Activated naive CD4-positive, alpha-beta T cell treated with anti-CD3 and anti-CD28 coated beads, Interleukin-2, amount 10 ng/mL, durations not matched to agents 7 days and 5 days (primary cell): ENCODE measurements at regions of chr6 and their contacts with region 1.

Region 1: GRCh38 chr6:43396407-43397149 is 27.1 kb upstream of the ZNF318 start:
- DNase-seq: no peak
- H3K4me3 Mint-ChIP-seq: no peak overlapping the region
- H3K27ac Mint-ChIP-seq: no peak overlapping the region
- H3K4me1 Mint-ChIP-seq: peaks cover 12% of the 10 kb centered on the region
- H3K27me3 Mint-ChIP-seq: peaks cover 63% of the 10 kb centered on the region

Region 2: GRCh38 chr6:43263314-43264178 is 133.0 kb before region 1 on chr6:
- CTCF ChIA-PET with region 1: interaction called, 12 read pairs
- DNase-seq: peak; percentile 87
- H3K4me3 Mint-ChIP-seq: no peak overlapping the region
- H3K27ac Mint-ChIP-seq: no peak overlapping the region
- H3K4me1 Mint-ChIP-seq: no peaks in the 10 kb centered on the region
- H3K27me3 Mint-ChIP-seq: peaks cover 62% of the 10 kb centered on the region

Region 3: DNA sequence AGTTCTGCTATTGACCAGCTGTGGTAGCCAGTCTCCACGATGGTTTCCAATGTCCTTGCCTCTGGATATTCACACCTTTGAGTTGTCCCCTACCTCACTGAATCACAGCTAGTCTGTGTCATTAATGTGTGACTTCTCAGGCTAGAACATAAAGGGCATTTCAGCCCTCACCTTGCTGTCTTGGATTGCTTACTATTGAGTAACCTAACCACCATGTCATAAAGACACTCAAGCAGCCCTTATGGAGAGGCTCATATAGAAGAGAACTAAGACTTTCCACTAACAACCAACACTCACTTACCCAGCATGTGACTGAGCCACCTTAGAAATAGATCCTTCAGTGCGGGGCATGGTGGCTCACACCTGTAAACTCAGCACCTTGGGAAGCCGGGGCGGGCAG is 11.7 kb after region 1 on chr6:
- CTCF ChIA-PET with region 1: no interaction called
- DNase-seq: no peak
- H3K4me3 Mint-ChIP-seq: no peak overlapping the region
- H3K27ac Mint-ChIP-seq: no peak overlapping the region
- H3K4me1 Mint-ChIP-seq: no peaks in the 10 kb centered on the region
- H3K27me3 Mint-ChIP-seq: peaks cover 54% of the 10 kb centered on the region

Region 4: DNA sequence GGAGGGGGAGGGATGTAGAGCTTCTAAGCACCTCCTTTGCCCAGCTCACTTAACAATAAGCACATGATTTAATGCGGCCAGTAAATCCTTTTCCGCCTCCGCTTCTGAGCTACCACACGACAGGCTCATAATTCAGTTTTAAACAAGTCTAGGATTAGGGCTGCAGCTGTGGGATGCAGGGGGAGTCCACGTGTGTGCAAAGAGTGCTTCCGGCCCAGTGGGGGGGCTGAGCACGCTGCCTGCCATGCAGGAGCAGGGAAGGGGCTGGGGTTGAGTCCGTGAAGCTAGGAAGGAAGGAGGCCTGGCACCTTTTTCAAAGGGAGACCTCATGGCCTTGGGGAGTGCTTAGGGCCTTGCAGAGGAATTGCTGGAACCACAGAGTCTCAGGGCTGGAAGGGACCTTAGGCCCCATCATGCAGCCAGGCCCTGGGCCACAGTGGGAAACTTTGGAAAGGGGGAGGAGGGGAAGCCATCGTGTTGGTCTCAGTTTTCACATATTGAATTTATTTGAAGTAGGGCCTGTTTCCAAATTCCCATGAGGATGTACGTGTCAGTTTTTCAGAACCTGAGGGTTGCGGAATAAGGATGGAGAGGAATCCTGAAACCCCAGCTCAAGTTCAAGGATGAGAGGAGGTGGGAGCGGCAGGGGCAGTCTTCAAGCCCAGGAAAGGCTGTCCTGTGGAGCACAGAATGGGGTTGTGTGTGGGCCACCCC is 469.5 kb after region 1 on chr6:
- CTCF ChIA-PET with region 1: no interaction called
- DNase-seq: no peak
- H3K4me3 Mint-ChIP-seq: no peak overlapping the region
- H3K27ac Mint-ChIP-seq: no peak overlapping the region
- H3K4me1 Mint-ChIP-seq: no peaks in the 10 kb centered on the region
- H3K27me3 Mint-ChIP-seq: peaks cover 28% of the 10 kb centered on the region